ENCODE measurements at regions of chr15 and their contacts with region 1.

Region 1: DNA sequence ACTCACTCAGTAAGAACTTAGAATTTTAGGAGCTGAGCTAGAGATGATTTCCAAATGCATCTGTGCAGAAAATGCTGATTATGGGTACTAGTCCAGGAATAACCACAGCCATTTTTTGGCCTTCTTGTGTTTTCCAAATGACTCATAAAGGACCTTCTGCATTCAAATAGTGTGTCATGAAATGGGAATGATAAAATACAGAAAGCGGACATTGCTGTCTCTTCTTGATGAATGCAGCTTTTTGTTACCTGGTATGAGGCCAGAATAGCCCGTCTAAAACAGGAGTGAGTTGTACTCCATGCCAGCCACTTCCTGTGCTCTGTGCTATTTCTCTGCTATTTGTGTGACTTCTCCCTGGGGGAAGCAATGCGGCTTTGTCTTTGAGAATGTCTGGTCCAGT is 20.5 kb upstream of the FRMD5 start:
- DNase-seq: peak; percentile 90
- ATAC-seq: peak; percentile 81
- H3K4me3 ChIP-seq: no peak overlapping the region
- H3K27ac ChIP-seq: no peak overlapping the region
- H3K4me1 ChIP-seq: 0 out of 2 replicates have a peak, but pooled peaks cover 2% of the 10 kb centered on the region
- H3K27me3 ChIP-seq: no peaks in the 10 kb centered on the region
- CTCF ChIP-seq: no peak
- POLR2A ChIP-seq: no peak
- RAD21 ChIP-seq: no peak

Region 2: GRCh38 chr15:43204016-43204901 is 1011.3 kb before region 1 on chr15:
- CTCF ChIA-PET with region 1: no interaction called
- POLR2A ChIA-PET with region 1: no interaction called
- dilution Hi-C with region 1: no loop called
- in situ Hi-C with region 1: no loop called
- intact Hi-C with region 1: no loop called
- DNase-seq: peak; percentile 75
- ATAC-seq: peak; percentile 93
- H3K4me3 ChIP-seq: no peak overlapping the region
- H3K27ac ChIP-seq: no peak overlapping the region
- H3K4me1 ChIP-seq: no peaks in the 10 kb centered on the region
- H3K27me3 ChIP-seq: peaks cover 51% of the 10 kb centered on the region
- CTCF ChIP-seq: peak; percentile 67
- POLR2A ChIP-seq: no peak
- RAD21 ChIP-seq: peak; percentile 60

Region 3: GRCh38 chr15:43872416-43873020 is 343.1 kb before region 1 on chr15:
- CTCF ChIA-PET with region 1: no interaction called
- POLR2A ChIA-PET with region 1: no interaction called
- dilution Hi-C with region 1: no loop called
- in situ Hi-C with region 1: no loop called
- intact Hi-C with region 1: loop called (anchors 1 kb)
- DNase-seq: peak; percentile 83
- ATAC-seq: peak; percentile 98
- H3K4me3 ChIP-seq: no peak overlapping the region
- H3K27ac ChIP-seq: no peak overlapping the region
- H3K4me1 ChIP-seq: no peaks in the 10 kb centered on the region
- H3K27me3 ChIP-seq: no peaks in the 10 kb centered on the region
- CTCF ChIP-seq: peak; percentile 81
- POLR2A ChIP-seq: no peak
- RAD21 ChIP-seq: peak; percentile 85

Region 4: GRCh38 chr15:43903864-43904290 is 311.7 kb before region 1 on chr15:
- CTCF ChIA-PET with region 1: interaction called, 4 read pairs
- POLR2A ChIA-PET with region 1: no interaction called
- dilution Hi-C with region 1: loop called (anchors 10 kb)
- in situ Hi-C with region 1: loop called (anchors 5 kb)
- intact Hi-C with region 1: loop called (anchors 1 kb)
- DNase-seq: peak; percentile 58
- ATAC-seq: peak; percentile 94
- H3K4me3 ChIP-seq: no peak overlapping the region
- H3K27ac ChIP-seq: no peak overlapping the region
- H3K4me1 ChIP-seq: peaks cover 5% of the 10 kb centered on the region; the same call in 1 of the 2 replicates
- H3K27me3 ChIP-seq: no peaks in the 10 kb centered on the region
- CTCF ChIP-seq: peak; percentile 94
- POLR2A ChIP-seq: no peak
- RAD21 ChIP-seq: peak; percentile 97

Region 5: GRCh38 chr15:43939070-43939469 is 276.5 kb before region 1 on chr15:
- CTCF ChIA-PET with region 1: no interaction called
- POLR2A ChIA-PET with region 1: no interaction called
- dilution Hi-C with region 1: no loop called
- in situ Hi-C with region 1: no loop called
- intact Hi-C with region 1: loop called (anchors 1 kb)
- DNase-seq: peak; percentile 33
- ATAC-seq: no peak
- H3K4me3 ChIP-seq: no peak overlapping the region
- H3K27ac ChIP-seq: no peak overlapping the region
- H3K4me1 ChIP-seq: peaks cover 2% of the 10 kb centered on the region; the same call in 1 of the 2 replicates
- H3K27me3 ChIP-seq: no peaks in the 10 kb centered on the region
- CTCF ChIP-seq: peak; percentile 61
- POLR2A ChIP-seq: no peak
- RAD21 ChIP-seq: peak; percentile 67

Region 6: DNA sequence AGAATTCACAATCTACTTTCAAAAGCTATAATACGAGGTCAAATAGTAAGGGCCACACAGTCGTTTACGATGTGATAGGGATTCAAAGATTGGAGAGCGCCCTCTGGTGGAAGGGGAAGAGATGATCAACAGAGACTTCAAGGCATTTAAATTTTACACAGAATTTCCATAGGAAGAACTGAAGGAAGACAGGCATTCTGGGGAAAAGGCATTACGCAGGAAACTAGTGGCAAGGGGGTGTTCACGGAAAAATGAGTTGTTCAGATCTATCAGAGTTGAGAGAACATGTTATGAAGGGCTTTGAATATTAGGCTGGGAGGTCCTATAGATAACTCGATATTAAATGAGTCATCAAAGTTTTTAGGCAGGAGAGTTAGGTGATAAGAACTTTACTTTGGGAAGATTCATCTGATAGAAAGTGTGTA is 149.3 kb before region 1 on chr15:
- CTCF ChIA-PET with region 1: interaction called, 3 read pairs
- POLR2A ChIA-PET with region 1: no interaction called
- dilution Hi-C with region 1: no loop called
- in situ Hi-C with region 1: no loop called
- intact Hi-C with region 1: loop called (anchors 5 kb)
- DNase-seq: peak; percentile 72
- ATAC-seq: peak; percentile 79
- H3K4me3 ChIP-seq: no peak overlapping the region
- H3K27ac ChIP-seq: no peak overlapping the region
- H3K4me1 ChIP-seq: no peaks in the 10 kb centered on the region
- H3K27me3 ChIP-seq: no peaks in the 10 kb centered on the region
- CTCF ChIP-seq: peak; percentile 85
- POLR2A ChIP-seq: no peak
- RAD21 ChIP-seq: peak; percentile 79

Region 7: DNA sequence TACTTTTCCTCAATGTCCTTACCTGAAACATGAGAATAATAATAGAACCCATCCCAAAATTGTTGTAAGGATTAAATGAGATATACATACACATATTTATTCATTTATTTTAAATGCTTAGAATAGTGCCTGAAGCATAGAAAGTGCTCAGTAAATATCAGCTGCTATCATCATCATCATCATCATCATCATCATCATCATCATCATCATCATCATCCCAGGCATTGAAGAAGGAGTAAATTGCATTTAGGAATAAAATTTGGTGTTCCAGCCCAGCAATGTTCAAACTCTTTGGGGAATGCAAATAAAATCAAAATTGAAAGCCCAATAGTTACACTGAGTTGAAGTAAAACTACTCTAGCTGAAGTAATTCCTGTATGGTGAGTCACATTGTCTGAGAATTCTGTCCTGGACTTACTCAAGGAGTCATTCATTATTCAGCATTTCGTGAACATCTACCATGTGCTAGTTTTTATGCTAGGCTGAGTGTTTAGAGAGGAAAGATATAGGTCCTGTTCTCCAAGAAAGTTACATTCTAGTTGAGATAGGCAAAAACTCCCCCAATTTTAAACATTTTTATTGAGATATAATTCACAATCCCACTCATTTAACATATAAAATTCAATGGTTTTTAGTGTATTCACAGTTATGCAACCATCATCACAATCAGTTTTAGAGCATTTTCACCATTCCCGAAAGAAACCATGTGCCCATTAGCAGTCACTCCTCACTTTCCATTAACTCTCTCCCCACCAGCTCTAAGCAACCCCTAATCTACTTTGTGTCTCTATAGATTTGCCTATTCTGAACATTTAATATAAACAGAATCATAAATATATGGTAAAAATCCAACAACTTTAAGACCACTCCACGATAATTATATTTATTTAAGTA is 127.8 kb before region 1 on chr15:
- CTCF ChIA-PET with region 1: no interaction called
- POLR2A ChIA-PET with region 1: no interaction called
- dilution Hi-C with region 1: no loop called
- in situ Hi-C with region 1: no loop called
- intact Hi-C with region 1: no loop called
- DNase-seq: peak; percentile 93
- ATAC-seq: peak; percentile 96
- H3K4me3 ChIP-seq: no peak overlapping the region
- H3K27ac ChIP-seq: no peak overlapping the region
- H3K4me1 ChIP-seq: peaks cover 5% of the 10 kb centered on the region
- H3K27me3 ChIP-seq: no peaks in the 10 kb centered on the region
- CTCF ChIP-seq: no peak
- POLR2A ChIP-seq: no peak
- RAD21 ChIP-seq: no peak

Region 8: DNA sequence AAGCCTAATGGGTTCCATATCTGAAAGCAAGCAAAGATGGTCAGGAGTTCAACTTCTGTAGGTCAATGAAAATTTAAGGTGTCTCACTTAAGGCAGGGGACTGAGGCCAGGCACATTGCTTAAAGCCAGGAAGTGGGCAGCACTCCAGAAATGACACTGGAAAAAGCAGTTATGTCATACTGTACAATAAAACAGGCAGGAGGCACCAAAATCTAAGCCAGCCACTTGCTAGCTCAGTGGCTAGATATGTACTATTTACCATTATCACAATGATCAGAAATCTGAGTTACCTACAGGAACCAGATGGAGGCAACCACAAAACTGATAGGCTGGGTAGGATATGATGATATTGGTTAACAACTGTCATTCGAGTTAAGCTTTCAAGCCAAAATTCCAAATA is 77.8 kb before region 1 on chr15:
- CTCF ChIA-PET with region 1: no interaction called
- POLR2A ChIA-PET with region 1: no interaction called
- dilution Hi-C with region 1: no loop called
- in situ Hi-C with region 1: no loop called
- intact Hi-C with region 1: no loop called
- DNase-seq: peak; percentile 11
- ATAC-seq: no peak
- H3K4me3 ChIP-seq: no peak overlapping the region
- H3K27ac ChIP-seq: no peak overlapping the region
- H3K4me1 ChIP-seq: 0 out of 2 replicates have a peak, but pooled peaks cover 1% of the 10 kb centered on the region
- H3K27me3 ChIP-seq: no peaks in the 10 kb centered on the region
- CTCF ChIP-seq: no peak
- POLR2A ChIP-seq: no peak
- RAD21 ChIP-seq: no peak

Measured in IMR-90 (cell line).